A549 (cell line): ENCODE measurements at regions of chr12 and their contacts with region 1.

Region 1: GRCh38 chr12:4763549-4763948 is 43.3 kb downstream of the GALNT8 start:
- DNase-seq: peak; percentile 31 to 66
- ATAC-seq: peak; percentile 68 to 93; a peak in 5 of 6 replicates
- H3K4me3 ChIP-seq: 0 out of 3 replicates have a peak overlapping the region, but pooled peaks have one; percentile 8
- H3K27ac ChIP-seq: no peak overlapping the region
- H3K4me1 ChIP-seq: no peaks in the 10 kb centered on the region
- CTCF ChIP-seq: 0 out of 3 replicates have a peak, but pooled peaks have one; percentile 7
- EP300 ChIP-seq: no peak
- POLR2A ChIP-seq: no peak
- RAD21 ChIP-seq: no peak

Region 2: GRCh38 chr12:4579305-4580102 is 184.0 kb before region 1 on chr12:
- CTCF ChIA-PET with region 1: interaction called, 39 read pairs
- POLR2A ChIA-PET with region 1: no interaction called
- DNase-seq: peak; percentile 8 to 35
- ATAC-seq: peak; percentile 66 to 74; a peak in 4 of 6 replicates
- H3K4me3 ChIP-seq: no peak overlapping the region
- H3K27ac ChIP-seq: no peak overlapping the region
- H3K4me1 ChIP-seq: no peaks in the 10 kb centered on the region
- CTCF ChIP-seq: peak; percentile 30; the same call in 2 of the 3 replicates
- EP300 ChIP-seq: no peak
- POLR2A ChIP-seq: no peak
- RAD21 ChIP-seq: peak; percentile 47 to 59; a peak in 4 of 5 replicates

Region 3: DNA sequence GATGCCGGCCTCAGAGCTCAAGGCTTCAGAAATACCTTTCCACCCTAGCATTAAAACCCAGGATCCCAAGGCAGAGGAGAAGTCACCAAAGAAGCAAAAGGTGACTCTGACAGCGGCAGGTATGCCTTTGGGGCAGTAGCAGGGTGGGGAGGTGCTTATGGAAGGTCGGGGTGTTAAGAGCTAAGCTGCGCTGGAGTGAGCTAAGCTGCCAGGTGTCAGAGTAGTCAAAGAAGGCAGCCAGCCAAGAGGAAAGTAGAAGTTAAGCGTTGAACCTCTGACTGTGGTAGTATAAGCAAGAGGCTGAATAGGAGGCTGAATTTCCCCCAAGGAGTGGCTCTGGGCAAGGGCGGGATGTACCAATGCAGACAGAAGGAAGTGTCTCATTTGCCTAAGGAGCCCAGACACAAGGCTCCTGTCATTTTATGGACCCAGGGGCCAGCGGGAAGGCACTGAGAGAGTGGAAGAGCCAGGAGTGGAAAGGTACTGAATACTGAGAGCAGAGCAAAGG is 172.3 kb before region 1 on chr12:
- CTCF ChIA-PET with region 1: interaction called, 19 read pairs
- POLR2A ChIA-PET with region 1: no interaction called
- DNase-seq: no peak
- ATAC-seq: 0 out of 6 replicates have a peak, but pooled peaks of 1 of the 2 experiments have one; percentile 22
- H3K4me3 ChIP-seq: no peak overlapping the region
- H3K27ac ChIP-seq: no peak overlapping the region
- H3K4me1 ChIP-seq: no peaks in the 10 kb centered on the region
- CTCF ChIP-seq: no peak
- EP300 ChIP-seq: no peak
- POLR2A ChIP-seq: no peak
- RAD21 ChIP-seq: no peak

Region 4: DNA sequence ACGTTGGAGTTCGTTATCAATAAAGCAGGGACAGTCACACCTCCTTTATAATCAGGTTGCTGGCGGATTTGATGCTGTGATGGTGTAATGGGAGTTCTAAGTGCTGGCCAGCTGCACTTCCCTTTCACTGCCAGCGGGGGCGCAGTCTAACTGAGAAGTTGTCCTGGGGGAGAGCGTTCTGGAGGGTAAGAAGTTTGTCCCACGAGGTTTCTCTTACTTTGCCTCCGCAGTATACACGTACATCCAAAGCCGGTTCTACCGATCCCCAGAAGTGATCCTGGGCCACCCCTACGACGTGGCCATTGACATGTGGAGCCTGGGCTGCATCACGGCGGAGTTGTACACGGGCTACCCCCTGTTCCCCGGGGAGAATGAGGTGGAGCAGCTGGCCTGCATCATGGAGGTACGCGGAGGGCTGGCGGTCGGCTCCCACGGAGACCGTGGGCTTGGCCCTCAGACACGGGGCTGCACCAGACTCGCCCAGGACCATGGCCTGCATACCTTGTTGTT is 158.8 kb before region 1 on chr12:
- CTCF ChIA-PET with region 1: interaction called, 16 read pairs
- POLR2A ChIA-PET with region 1: no interaction called
- DNase-seq: peak; percentile 80 to 93
- ATAC-seq: peak; percentile 96 to 98
- H3K4me3 ChIP-seq: peak overlapping the region; percentile 83
- H3K27ac ChIP-seq: peak overlapping the region; percentile 81 to 89
- H3K4me1 ChIP-seq: peaks cover 5% of the 10 kb centered on the region; the same call in 1 of the 3 replicates
- CTCF ChIP-seq: peak; percentile 71
- EP300 ChIP-seq: no peak
- POLR2A ChIP-seq: peak; percentile 67
- RAD21 ChIP-seq: peak; percentile 45 to 62; a peak in 4 of 5 replicates

Region 5: GRCh38 chr12:4786797-4787196 is 23.2 kb after region 1 on chr12:
- CTCF ChIA-PET with region 1: no interaction called
- POLR2A ChIA-PET with region 1: no interaction called
- DNase-seq: no peak
- ATAC-seq: no peak
- H3K4me3 ChIP-seq: no peak overlapping the region
- H3K27ac ChIP-seq: no peak overlapping the region
- H3K4me1 ChIP-seq: no peaks in the 10 kb centered on the region
- CTCF ChIP-seq: no peak
- EP300 ChIP-seq: no peak
- POLR2A ChIP-seq: no peak
- RAD21 ChIP-seq: no peak